A673 (cell line): ENCODE measurements at regions of chr10 and their contacts with region 1.

Region 1: GRCh38 chr10:128078136-128078969 is 47.9 kb downstream of the MKI67 start:
- DNase-seq: peak; percentile 52
- H3K4me3 ChIP-seq: no peak overlapping the region
- H3K27ac ChIP-seq: no peak overlapping the region
- H3K4me1 ChIP-seq: no peaks in the 10 kb centered on the region
- H3K27me3 ChIP-seq: no peaks in the 10 kb centered on the region
- CTCF ChIP-seq: peak; percentile 82

Region 2: GRCh38 chr10:128116851-128117615 is 38.7 kb after region 1 on chr10:
- CTCF ChIA-PET with region 1: no interaction called
- POLR2A ChIA-PET with region 1: no interaction called
- intact Hi-C with region 1: no loop called
- DNase-seq: no peak
- H3K4me3 ChIP-seq: no peak overlapping the region
- H3K27ac ChIP-seq: no peak overlapping the region
- H3K4me1 ChIP-seq: no peaks in the 10 kb centered on the region
- H3K27me3 ChIP-seq: no peaks in the 10 kb centered on the region
- CTCF ChIP-seq: peak; percentile 61

Region 3: GRCh38 chr10:128150045-128150493 is 71.7 kb after region 1 on chr10:
- CTCF ChIA-PET with region 1: interaction called, 5 read pairs
- POLR2A ChIA-PET with region 1: no interaction called
- intact Hi-C with region 1: loop called (anchors 2 kb)
- DNase-seq: peak; percentile 86
- H3K4me3 ChIP-seq: peak overlapping the region; percentile 45
- H3K27ac ChIP-seq: no peak overlapping the region
- H3K4me1 ChIP-seq: peaks cover 10% of the 10 kb centered on the region
- H3K27me3 ChIP-seq: no peaks in the 10 kb centered on the region
- CTCF ChIP-seq: peak; percentile 83